GM18951 (cell line): ENCODE measurements at regions of chr12 and their contacts with region 1.

Region 1: DNA sequence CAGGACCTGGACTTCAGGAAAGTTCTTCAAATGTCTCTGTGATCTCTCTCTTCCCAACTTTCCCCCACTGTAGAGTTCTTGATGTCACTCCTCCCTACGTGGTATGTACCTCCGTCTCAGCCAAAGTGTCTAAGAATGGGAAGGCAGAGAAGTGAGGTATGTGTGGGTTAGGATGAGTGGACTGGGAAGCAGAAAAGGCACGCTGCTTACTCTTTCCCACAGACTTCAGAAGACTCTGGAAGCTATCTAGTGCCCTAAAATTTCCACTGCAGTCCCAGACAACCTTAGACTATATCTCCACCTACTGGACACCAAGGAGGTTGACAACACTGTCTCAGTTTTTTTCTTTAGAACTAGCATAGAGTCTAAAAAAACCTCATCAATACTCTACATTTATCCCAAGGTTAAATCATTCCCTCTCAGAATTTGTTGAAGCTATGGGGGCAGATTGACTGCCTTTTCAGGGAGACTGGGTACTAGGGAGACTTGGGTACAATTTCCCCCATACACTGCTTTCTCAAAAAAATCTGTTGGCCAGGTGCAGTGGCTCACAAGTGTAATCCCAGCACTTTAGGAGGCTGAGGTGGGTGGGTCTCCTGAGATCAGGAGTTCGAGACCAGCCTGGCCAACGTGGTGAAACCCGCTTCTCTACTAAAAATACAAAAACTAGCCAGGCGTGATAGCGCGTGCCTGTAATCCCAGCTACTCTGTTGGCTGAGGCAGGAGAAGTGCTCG is 20.6 kb upstream of the ITGA5 start:
- POLR2A ChIP-seq: no peak

Region 2: DNA sequence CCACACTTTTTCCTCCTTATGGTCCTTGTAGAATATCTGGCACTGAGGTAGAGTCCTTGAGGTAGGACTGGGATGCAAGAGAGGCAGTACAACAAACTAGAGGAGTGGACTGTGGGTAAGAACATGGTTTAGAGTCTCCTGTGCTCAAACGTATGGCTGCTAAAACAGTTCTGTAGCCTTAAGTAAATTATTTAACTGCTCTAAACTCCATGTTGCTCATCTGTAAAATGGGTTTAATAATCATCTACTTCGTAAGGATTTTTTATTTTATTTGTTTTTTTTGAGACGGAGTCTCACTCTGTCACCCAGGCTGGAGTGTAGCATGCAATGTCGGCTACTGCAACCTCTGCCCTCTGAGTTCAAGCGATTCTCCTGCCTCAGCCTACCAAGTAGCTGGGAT is 118.3 kb before region 1 on chr12:
- in situ Hi-C with region 1: no loop called
- POLR2A ChIP-seq: no peak

Region 3: GRCh38 chr12:54398995-54399793 is 40.5 kb before region 1 on chr12:
- in situ Hi-C with region 1: loop called (anchors 5 kb)
- POLR2A ChIP-seq: no peak

Region 4: GRCh38 chr12:54716261-54716660 is 276.6 kb after region 1 on chr12:
- in situ Hi-C with region 1: no loop called
- POLR2A ChIP-seq: no peak